Activated B cell treated with CpG ODN at 0.5 μM for 24 hours (primary cell): ENCODE measurements at regions of chr22 and their contacts with region 1.

Region 1: GRCh38 chr22:20741634-20742581 is 32.0 kb upstream of the SERPIND1 start:
- DNase-seq: no peak
- ATAC-seq: peak; percentile 40
- H3K4me3 Mint-ChIP-seq: no peak overlapping the region
- H3K27ac Mint-ChIP-seq: no peak overlapping the region
- H3K4me1 Mint-ChIP-seq: peaks cover 14% of the 10 kb centered on the region
- H3K27me3 Mint-ChIP-seq: no peaks in the 10 kb centered on the region
- CTCF ChIP-seq: no peak

Region 2: DNA sequence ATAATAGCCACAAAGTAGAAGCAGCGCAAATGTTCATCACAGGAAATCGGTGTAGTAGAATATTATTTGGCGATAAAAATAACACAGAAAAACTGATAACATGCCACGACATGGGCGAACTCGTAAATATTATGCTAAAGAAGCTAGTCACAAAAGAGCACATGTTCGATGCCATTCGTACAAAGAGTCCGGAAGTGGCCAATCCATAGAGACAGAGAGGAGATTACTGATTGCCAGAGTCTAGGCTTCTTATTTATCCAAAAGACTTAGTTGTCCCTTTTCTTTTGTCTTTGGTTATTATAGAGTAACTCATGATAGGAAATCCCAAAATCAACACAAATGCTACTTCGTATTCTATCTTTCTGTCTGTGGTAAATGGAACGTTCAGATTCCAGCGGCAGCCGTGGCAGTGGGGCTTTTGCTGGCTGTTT is 178.0 kb before region 1 on chr22:
- CTCF ChIA-PET with region 1: interaction called, 4 read pairs
- POLR2A ChIA-PET with region 1: no interaction called
- intact Hi-C with region 1: loop called (anchors 1 kb)
- DNase-seq: no peak
- ATAC-seq: no peak
- H3K4me3 Mint-ChIP-seq: no peak overlapping the region
- H3K27ac Mint-ChIP-seq: no peak overlapping the region
- H3K4me1 Mint-ChIP-seq: peaks cover 2% of the 10 kb centered on the region
- H3K27me3 Mint-ChIP-seq: no peaks in the 10 kb centered on the region
- CTCF ChIP-seq: no peak

Region 3: DNA sequence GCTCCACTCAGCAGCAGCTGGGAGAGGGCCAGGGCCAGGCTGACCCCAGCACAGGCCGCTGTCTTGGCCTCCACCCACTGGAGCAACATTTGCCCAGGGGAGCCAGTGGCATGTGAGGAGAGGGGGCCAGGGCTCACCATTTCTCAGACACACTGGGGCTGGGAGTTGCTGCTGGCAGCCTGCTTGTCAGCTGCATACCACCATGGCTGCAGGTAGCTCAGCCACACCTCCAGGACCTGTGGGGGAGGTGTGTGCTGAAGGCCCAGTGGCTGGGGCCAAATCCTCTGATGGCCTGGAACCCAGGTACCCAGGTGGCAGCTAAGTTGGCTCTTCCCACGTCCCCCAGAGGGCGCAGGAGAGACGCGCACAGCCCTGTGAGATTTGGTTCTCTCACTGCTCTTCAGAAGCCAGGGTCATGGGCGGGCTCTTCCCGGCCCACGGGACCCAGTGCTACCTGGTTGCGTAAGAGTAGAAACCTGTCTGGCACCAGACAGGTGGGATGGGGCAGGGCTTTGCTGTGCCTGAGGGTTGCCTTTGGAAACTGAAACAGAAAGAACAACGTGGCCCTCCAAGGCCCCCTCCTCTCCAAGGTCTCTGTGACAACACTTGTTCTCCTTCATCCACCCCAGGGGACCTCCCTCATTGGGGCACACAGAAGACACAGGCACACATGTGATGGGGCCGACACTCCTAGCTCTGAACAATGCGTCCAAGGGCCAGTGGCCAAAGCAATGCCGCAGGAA is 135.7 kb before region 1 on chr22:
- CTCF ChIA-PET with region 1: interaction called, 20 read pairs
- POLR2A ChIA-PET with region 1: no interaction called
- intact Hi-C with region 1: loop called (anchors 1 kb)
- DNase-seq: peak; percentile 41
- ATAC-seq: peak; percentile 92
- H3K4me3 Mint-ChIP-seq: no peak overlapping the region
- H3K27ac Mint-ChIP-seq: no peak overlapping the region
- H3K4me1 Mint-ChIP-seq: peaks cover 4% of the 10 kb centered on the region
- H3K27me3 Mint-ChIP-seq: no peaks in the 10 kb centered on the region
- CTCF ChIP-seq: no peak